GM12878 (cell line): ENCODE measurements at regions of chr11 and their contacts with region 1.

Region 1: GRCh38 chr11:120612513-120613263 is 101.1 kb downstream of the GRIK4 start:
- DNase-seq: peak; percentile 94
- ATAC-seq: peak; percentile 91
- H3K4me3 ChIP-seq: no peak overlapping the region; the same call in 1 of the 2 replicates
- H3K27ac ChIP-seq: peak overlapping the region; percentile 75
- H3K4me1 ChIP-seq: peaks cover 32% of the 10 kb centered on the region
- H3K27me3 ChIP-seq: no peaks in the 10 kb centered on the region
- CTCF ChIP-seq: peak in 1 of 3 experiments; percentile 19; a peak in 1 of 6 replicates
- EP300 ChIP-seq: peak; percentile 76 to 89; a peak in 3 of 4 replicates
- POLR2A ChIP-seq: no peak; the same call in 1 of the 2 replicates
- RAD21 ChIP-seq: no peak

Region 2: DNA sequence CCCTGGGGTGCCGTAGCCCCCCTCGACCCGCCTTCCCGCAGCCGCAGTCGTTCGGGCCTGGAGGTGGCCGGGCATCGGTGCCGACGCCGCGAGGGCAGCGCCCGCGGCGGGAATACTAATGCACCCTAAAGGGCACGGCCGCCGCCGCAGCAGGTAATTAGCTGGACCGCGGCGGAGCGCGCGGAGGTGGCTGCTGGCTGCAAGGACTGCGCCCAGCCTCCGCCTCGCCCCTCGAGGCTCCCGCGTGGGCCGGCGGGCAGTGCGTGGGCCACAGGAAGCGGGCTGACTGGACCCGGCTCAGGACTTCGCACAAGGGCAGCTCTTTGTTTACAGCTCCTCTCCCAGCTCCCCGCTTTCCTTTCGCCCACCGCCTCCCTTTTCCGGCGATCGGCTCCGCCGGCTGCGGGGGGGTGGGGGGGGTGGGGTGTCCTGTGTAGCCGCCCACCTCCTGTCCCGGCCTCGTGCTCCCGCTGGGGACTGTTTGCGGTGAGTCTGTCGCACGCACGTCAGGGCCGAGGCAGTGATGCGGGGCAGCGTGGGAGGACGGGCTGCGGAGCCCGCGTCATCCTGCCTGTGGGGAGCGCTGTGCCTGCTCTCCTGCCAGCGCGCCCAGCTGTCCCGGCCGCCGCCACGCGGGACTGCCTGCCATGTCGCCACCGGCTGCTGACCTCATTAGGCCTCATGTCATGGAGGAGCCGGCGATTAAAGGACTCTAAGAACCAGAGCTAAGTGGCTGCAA is 47.9 kb before region 1 on chr11:
- CTCF ChIA-PET with region 1: interaction called, 18 read pairs
- POLR2A ChIA-PET with region 1: interaction called, 8 read pairs
- RAD21 ChIA-PET with region 1: interaction called, 25 read pairs
- SMC1A ChIA-PET with region 1: interaction called, 7 read pairs
- in situ Hi-C with region 1: no loop called
- intact Hi-C with region 1: loop called (anchors 2 kb)
- DNase-seq: peak; percentile 49
- ATAC-seq: peak; percentile 90
- H3K4me3 ChIP-seq: peak overlapping the region; percentile 47; the same call in 1 of the 2 replicates
- H3K27ac ChIP-seq: peak overlapping the region; percentile 35
- H3K4me1 ChIP-seq: peaks cover 18% of the 10 kb centered on the region
- H3K27me3 ChIP-seq: no peaks in the 10 kb centered on the region
- CTCF ChIP-seq: peak; percentile 21 to 44 (median 37); a peak in 3 of 6 replicates
- EP300 ChIP-seq: peak; percentile 85 to 94
- POLR2A ChIP-seq: no peak
- RAD21 ChIP-seq: peak; percentile 9; the same call in 1 of the 2 replicates

Region 3: DNA sequence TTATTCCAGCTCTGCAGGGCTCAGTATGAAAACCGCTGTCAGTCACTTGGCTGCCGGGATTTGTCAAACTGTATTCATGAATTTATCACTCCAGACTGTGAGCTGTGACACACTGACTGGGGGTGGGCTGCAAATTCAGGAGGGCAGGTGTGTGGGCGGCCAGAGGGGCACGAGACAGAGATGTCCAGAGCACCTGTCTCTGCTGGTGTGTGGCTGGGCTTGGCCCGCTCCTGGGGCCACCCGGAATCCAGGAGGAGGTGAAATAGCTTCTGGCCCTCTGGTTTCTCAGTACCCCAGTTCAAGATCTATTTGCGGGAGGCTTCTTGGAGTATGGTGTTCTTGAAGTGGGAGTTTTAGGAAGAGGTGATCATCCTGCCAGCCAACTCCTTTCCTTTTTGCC is 24.7 kb before region 1 on chr11:
- CTCF ChIA-PET with region 1: interaction called, 3 read pairs
- POLR2A ChIA-PET with region 1: no interaction called
- RAD21 ChIA-PET with region 1: interaction called, 5 read pairs
- SMC1A ChIA-PET with region 1: interaction called, 10 read pairs
- in situ Hi-C with region 1: no loop called
- intact Hi-C with region 1: no loop called
- DNase-seq: no peak
- ATAC-seq: no peak
- H3K4me3 ChIP-seq: no peak overlapping the region
- H3K27ac ChIP-seq: no peak overlapping the region
- H3K4me1 ChIP-seq: no peaks in the 10 kb centered on the region
- H3K27me3 ChIP-seq: no peaks in the 10 kb centered on the region
- CTCF ChIP-seq: no peak
- EP300 ChIP-seq: no peak
- POLR2A ChIP-seq: no peak
- RAD21 ChIP-seq: no peak

Region 4: GRCh38 chr11:120632579-120632978 is 19.9 kb after region 1 on chr11:
- CTCF ChIA-PET with region 1: interaction called, 19 read pairs
- POLR2A ChIA-PET with region 1: interaction called, 3 read pairs
- RAD21 ChIA-PET with region 1: interaction called, 5 read pairs
- SMC1A ChIA-PET with region 1: interaction called, 6 read pairs
- in situ Hi-C with region 1: no loop called
- intact Hi-C with region 1: no loop called
- DNase-seq: no peak
- ATAC-seq: peak; percentile 87
- H3K4me3 ChIP-seq: no peak overlapping the region
- H3K27ac ChIP-seq: no peak overlapping the region
- H3K4me1 ChIP-seq: peaks cover 10% of the 10 kb centered on the region
- H3K27me3 ChIP-seq: no peaks in the 10 kb centered on the region
- CTCF ChIP-seq: peak; percentile 16 to 64 (median 62)
- EP300 ChIP-seq: no peak
- POLR2A ChIP-seq: no peak
- RAD21 ChIP-seq: peak; percentile 60

Region 5: GRCh38 chr11:120674542-120674941 is 61.9 kb after region 1 on chr11:
- CTCF ChIA-PET with region 1: interaction called, 4 read pairs
- POLR2A ChIA-PET with region 1: no interaction called
- RAD21 ChIA-PET with region 1: interaction called, 11 read pairs
- SMC1A ChIA-PET with region 1: no interaction called
- in situ Hi-C with region 1: no loop called
- intact Hi-C with region 1: no loop called
- DNase-seq: no peak
- ATAC-seq: no peak
- H3K4me3 ChIP-seq: no peak overlapping the region
- H3K27ac ChIP-seq: no peak overlapping the region
- H3K4me1 ChIP-seq: no peaks in the 10 kb centered on the region; the same call in 1 of the 2 replicates
- H3K27me3 ChIP-seq: no peaks in the 10 kb centered on the region
- CTCF ChIP-seq: no peak
- EP300 ChIP-seq: no peak
- POLR2A ChIP-seq: no peak
- RAD21 ChIP-seq: no peak